Common myeloid progenitor, CD34-positive (primary cell): ENCODE measurements at regions of chr11 and their contacts with region 1.

Region 1: DNA sequence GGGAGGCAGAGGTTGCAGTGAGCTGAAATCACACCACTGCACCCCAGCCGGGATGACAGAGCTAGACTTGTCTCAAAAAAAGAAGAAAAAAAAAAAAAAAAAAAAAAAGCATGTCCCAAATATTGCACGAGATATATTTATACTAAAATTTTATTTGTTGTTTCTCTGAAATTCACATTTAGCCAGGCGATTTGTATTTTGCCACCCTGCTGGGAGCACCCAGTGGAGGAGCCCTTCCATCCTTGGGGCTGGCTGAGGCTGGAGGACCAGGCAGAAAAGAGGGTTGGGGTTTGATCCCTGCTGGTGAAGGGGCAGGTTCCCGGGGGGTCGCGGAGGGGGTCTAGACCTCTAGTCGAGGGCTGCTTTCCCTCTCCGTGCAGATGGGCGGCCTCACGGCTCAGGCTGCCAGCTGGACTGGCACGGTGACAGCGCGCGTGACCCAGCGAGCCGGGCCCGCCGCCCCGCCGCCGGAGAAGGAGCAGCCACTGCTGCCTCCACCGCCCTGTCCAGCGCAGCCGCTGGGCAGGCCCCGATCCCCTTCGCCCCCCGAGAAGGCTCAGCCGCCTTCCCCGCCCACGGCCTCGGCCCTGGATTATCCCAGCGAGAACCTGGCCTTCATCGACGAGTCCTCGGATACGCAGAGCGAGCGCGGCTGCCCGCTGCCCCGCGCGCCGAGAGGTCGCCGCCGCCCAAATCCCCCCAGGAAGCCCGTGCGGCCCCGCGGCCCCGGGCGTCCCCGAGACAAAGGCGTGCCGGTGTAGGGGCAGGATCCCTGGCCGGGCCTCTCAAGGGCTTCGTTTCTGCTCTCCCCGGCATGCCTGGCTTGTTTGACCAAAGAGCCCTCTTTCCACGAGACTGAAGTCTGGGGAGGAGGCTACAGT is 952 bp upstream of the CATSPERZ start:
- DNase-seq: peak in 2 of 3 donors; percentile 33 to 57
- H3K4me3 ChIP-seq: peak overlapping the region in 5 of 7 experiments; percentile 6 to 66 (median 40)
- H3K27ac ChIP-seq: no peak overlapping the region
- H3K4me1 ChIP-seq: peaks cover 0 to 41% (median 33%) of the 10 kb centered on the region in 4 experiments
- H3K27me3 ChIP-seq: peaks cover 14 to 73% (median 51%) of the 10 kb centered on the region in 5 experiments

Region 2: DNA sequence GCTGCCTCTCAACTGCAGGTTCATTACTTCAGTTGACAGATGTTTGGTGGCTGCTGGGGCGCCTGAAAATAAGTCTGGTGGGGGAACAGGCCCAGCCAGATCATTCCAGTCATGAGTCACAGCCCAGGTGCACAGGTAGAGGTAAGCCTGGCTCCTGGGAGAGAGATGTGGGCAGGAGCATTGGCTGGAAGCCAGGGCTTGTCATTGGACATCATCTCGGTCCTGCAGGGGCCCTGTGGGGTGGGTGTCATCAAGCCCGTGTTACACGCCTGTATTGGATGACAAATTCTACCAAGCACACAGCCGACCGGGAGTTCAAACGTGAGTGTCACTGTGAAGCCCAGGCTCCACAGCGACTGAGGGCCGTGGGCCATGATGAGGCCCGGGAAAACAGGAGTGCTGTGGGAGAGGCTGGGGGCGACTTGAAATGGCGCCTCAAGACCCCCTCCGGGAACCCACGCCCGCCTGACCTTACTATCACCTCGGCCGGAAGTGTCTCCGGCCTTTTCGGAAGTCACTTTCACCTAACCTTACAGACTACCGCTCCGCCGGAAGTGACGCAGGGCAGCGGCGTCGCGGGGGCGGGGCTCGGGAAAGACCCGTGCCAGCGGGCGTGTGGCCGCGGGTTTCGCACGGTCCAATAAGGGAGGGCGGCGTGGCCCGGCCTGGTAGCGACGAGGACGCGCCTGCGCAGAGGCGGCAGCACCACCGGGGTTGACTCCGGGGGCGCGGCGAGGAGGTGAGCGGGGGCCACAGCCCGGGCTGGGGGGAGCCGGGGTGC is 58.6 kb before region 1 on chr11 and contains the start of gene FKBP2:
- CTCF ChIA-PET with region 1: interaction called, 11 read pairs
- POLR2A ChIA-PET with region 1: no interaction called
- DNase-seq: peak; percentile 96 to 98 (median 98)
- H3K4me3 ChIP-seq: peak within 1 kb of the TSS; percentile 69 to 91 (median 85)
- H3K27ac ChIP-seq: peak within 1 kb of the TSS; percentile 96 to 97
- H3K4me1 ChIP-seq: peaks cover 4 to 56% (median 49%) of the 10 kb centered on the region in 4 experiments
- H3K27me3 ChIP-seq: no peaks in the 10 kb centered on the region

Region 3: DNA sequence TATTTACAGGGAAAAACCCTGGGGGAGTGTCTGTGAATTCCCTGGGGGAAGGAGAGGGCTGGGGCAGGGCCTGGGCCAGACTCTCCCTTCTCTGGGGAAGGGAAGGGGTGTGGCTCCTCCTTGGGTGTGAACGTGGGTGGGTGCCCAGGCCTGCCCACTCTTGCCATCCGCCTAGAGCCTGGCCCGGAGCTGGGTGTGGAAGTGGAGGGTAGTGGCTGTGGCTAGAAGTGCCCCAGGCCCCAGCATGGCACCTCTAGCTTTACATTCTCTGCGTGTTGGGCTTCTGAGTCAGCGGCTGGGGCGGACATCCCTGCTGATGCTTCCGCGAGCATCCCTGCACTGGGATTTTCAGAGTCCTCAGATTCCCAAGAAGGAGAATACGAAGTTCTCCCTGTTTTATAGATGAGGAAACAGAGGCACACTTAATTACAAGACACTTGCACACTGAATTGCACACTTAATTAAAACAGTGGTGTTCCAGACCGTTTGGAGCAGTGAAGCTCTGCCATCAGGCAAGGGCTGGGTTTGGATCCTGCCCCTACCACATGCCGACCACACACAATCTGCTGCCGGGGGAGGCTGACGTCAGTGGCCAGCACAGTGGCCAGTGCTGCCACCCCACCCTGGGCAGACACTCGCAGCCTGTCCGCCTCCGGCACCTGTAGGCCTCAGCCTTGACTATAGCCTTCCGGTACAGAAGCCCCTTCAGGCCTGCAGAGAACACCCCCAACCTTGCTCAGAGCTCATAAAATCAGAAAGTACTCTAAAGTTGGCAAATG is 22.4 kb before region 1 on chr11:
- CTCF ChIA-PET with region 1: interaction called, 75 read pairs
- POLR2A ChIA-PET with region 1: interaction called, 12 read pairs
- DNase-seq: no peak
- H3K4me3 ChIP-seq: no peak overlapping the region
- H3K27ac ChIP-seq: no peak overlapping the region
- H3K4me1 ChIP-seq: peaks cover 0 to 9% (median 5%) of the 10 kb centered on the region in 4 experiments
- H3K27me3 ChIP-seq: no peaks in the 10 kb centered on the region

Region 4: GRCh38 chr11:64284048-64284961 is 14.9 kb before region 1 on chr11 and contains the start of gene BAD:
- CTCF ChIA-PET with region 1: interaction called, 45 read pairs
- POLR2A ChIA-PET with region 1: no interaction called
- DNase-seq: peak; percentile 91 to 93 (median 93)
- H3K4me3 ChIP-seq: peak within 1 kb of the TSS; percentile 54 to 92 (median 81)
- H3K27ac ChIP-seq: peak within 1 kb of the TSS; percentile 98 to 99
- H3K4me1 ChIP-seq: peaks cover 0 to 21% (median 20%) of the 10 kb centered on the region in 4 experiments
- H3K27me3 ChIP-seq: peaks cover 0 to under 1% (median 0%) of the 10 kb centered on the region in 5 experiments